ENCODE measurements at regions of chr17 and their contacts with region 1.

Region 1: GRCh38 chr17:82775001-82775823 is 23.3 kb downstream of the TBCD start:
- DNase-seq: peak; percentile 41
- H3K4me3 ChIP-seq: no peak overlapping the region
- H3K27ac ChIP-seq: no peak overlapping the region
- H3K4me1 ChIP-seq: no peaks in the 10 kb centered on the region; a peak in 1 of 4 replicates
- H3K27me3 ChIP-seq: no peaks in the 10 kb centered on the region
- CTCF ChIP-seq: peak; percentile 94
- EP300 ChIP-seq: no peak
- RAD21 ChIP-seq: peak; percentile 65

Region 2: GRCh38 chr17:82655038-82655479 is 120.2 kb before region 1 on chr17:
- CTCF ChIA-PET with region 1: no interaction called
- POLR2A ChIA-PET with region 1: no interaction called
- DNase-seq: no peak
- H3K4me3 ChIP-seq: no peak overlapping the region
- H3K27ac ChIP-seq: no peak overlapping the region
- H3K4me1 ChIP-seq: no peaks in the 10 kb centered on the region
- H3K27me3 ChIP-seq: no peaks in the 10 kb centered on the region
- CTCF ChIP-seq: no peak
- EP300 ChIP-seq: no peak
- RAD21 ChIP-seq: no peak

Region 3: DNA sequence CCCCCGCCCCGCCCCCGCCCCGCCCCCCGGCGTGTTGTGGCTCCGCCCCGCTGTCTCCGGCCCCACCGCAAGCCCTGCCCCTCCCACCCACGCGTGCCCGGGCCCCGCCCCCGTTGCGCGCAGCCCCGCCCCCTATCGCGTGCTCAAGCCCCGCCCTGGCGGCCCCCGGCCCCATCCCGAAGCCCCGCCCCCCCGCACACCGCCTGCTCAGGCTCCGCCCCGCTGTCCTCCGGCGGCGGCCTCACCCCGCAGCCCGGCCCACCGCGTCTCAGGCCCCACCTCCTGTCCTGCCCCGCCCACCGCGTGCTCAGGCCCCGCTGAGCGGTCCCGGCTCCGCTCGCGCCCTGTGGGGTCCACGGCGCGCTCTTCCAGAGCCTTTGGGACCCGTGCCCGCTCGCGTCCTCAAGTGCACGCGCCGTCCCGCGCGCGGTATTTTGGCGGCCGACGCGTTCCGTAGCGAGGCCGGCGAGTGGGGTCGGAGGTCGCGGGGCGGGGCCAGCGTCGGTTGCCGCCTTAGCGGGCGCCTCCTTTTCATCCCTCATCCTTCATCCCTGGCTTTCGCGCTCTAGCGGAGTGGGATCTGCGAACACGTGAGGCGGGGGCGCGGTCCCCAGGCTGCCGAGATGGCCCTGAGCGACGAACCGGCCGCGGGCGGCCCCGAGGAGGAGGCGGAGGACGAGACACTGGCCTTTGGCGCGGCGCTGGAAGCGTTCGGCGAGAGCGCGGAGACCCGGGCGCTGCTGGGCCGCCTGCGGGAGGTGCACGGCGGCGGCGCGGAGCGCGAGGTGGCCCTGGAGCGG is 23.4 kb before region 1 on chr17 and contains the start of gene TBCD:
- CTCF ChIA-PET with region 1: interaction called, 22 read pairs
- POLR2A ChIA-PET with region 1: no interaction called
- DNase-seq: peak; percentile 100
- H3K4me3 ChIP-seq: peak within 1 kb of the TSS; percentile 78 to 98
- H3K27ac ChIP-seq: peak within 1 kb of the TSS; percentile 75 to 89
- H3K4me1 ChIP-seq: peaks cover 6 to 14% of the 10 kb centered on the region in 2 experiments; a peak in 1 of 4 replicates
- H3K27me3 ChIP-seq: no peaks in the 10 kb centered on the region
- CTCF ChIP-seq: no peak
- EP300 ChIP-seq: no peak
- RAD21 ChIP-seq: no peak
- polyA plus RNA-seq, gene TBCD: 78.7 and 107 TPM in 2 replicates

Region 4: DNA sequence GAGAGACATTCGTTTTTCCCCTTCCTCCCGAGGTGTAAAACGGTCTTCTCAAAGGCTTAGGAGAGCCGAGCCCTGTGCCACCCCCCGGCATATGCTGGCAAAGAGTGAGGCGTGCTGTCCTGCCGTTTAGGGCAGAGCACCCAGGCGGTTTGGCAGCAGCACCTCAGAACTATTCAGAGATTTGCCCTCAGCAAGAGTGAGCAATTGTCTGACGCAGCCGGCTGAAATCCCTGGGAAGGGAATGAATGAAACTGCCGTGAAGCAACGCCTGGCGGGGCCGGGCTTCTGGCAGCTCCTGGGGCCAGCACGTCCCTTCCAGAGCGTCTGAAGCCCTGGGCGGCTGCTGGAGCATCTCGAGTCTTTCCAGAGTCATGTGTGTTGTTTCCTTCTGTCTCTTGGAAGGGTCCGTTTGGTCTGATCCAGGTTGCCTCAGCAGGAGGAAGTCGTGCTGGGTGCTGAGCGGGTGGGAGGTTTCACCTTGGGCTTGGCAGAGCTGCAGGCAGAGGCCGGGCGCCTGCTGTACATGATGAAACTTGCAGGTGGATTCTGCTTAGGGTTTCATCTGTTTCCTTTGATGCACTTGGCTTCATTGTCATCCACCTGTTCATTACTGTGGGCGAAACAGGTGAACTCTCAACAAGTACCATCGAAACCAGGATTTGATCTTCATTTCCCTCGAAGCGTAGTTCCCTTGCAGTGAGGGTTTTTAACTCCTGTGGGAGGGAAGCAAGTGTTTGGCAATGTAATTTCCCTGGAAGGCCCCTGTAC is 12.1 kb after region 1 on chr17:
- CTCF ChIA-PET with region 1: interaction called, 49 read pairs
- POLR2A ChIA-PET with region 1: no interaction called
- DNase-seq: no peak
- H3K4me3 ChIP-seq: no peak overlapping the region
- H3K27ac ChIP-seq: no peak overlapping the region
- H3K4me1 ChIP-seq: peaks cover 3 to 4% of the 10 kb centered on the region in 2 experiments; a peak in 1 of 4 replicates
- H3K27me3 ChIP-seq: no peaks in the 10 kb centered on the region
- CTCF ChIP-seq: no peak
- EP300 ChIP-seq: no peak
- RAD21 ChIP-seq: no peak

Measured in SK-N-SH (cell line).